ENCODE measurements at regions of chr21 and their contacts with region 1.

Region 1: GRCh38 chr21:36113647-36114428 is 21.0 kb upstream of the CBR3 start:
- DNase-seq: no peak
- H3K4me3 ChIP-seq: no peak overlapping the region
- H3K27ac ChIP-seq: no peak overlapping the region
- H3K4me1 ChIP-seq: no peaks in the 10 kb centered on the region
- H3K27me3 ChIP-seq: no peaks in the 10 kb centered on the region
- CTCF ChIP-seq: no peak
- EP300 ChIP-seq: no peak
- POLR2A ChIP-seq: no peak

Region 2: GRCh38 chr21:35616090-35616489 is 497.7 kb before region 1 on chr21:
- intact Hi-C with region 1: no loop called
- DNase-seq: no peak
- H3K4me3 ChIP-seq: no peak overlapping the region
- H3K27ac ChIP-seq: no peak overlapping the region
- H3K4me1 ChIP-seq: peaks cover 2% of the 10 kb centered on the region
- H3K27me3 ChIP-seq: no peaks in the 10 kb centered on the region
- CTCF ChIP-seq: peak in 1 of 3 donors; percentile 54
- EP300 ChIP-seq: no peak
- POLR2A ChIP-seq: no peak

Region 3: DNA sequence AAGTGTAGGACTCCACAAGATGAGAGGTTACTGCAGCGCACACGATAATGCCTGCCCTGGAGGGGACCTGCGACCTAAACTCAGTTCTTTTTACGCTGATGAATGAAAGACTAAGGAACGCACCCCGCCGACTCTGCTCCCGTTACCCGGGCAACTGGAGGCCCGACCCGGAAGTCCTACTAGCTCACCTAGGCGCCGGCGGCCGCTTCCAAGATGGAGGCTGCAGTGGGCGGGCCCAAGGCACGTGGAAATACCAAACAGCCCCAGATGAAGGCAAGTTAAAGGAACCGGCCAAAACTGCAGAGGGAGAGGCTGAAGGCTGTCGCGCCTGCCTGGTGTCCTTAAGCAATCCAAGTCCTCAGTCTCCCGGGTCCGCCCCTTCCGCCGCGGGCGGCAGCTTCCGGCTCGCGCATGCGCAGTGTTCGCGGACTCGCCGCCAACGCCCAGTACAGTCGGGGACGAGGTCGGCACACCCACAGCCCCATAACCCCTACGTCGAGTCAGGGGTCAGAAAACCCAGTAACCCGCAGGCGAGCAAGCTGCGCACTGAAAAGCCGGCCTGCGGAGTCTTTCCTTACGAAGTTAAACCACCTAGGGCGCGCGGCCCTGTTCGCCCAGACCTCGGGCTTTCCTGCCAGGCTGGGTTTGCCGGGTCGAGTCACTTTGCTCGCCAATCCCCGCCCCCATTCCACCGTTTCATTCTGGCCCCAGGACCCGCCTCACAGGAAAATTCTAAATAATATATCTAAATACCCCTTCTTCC is 53.5 kb before region 1 on chr21 and contains the start of gene SETD4:
- intact Hi-C with region 1: loop called in 1 of 4 experiments (anchors 10 kb)
- DNase-seq: peak; percentile 88 to 95 (median 93)
- H3K4me3 ChIP-seq: peak within 1 kb of the TSS; percentile 73
- H3K27ac ChIP-seq: peak within 1 kb of the TSS; percentile 73 to 77
- H3K4me1 ChIP-seq: peaks cover 2% of the 10 kb centered on the region
- H3K27me3 ChIP-seq: no peaks in the 10 kb centered on the region
- CTCF ChIP-seq: no peak
- EP300 ChIP-seq: no peak
- POLR2A ChIP-seq: peak; percentile 71
- total RNA-seq, gene SETD4: 12.2 to 22.9 (median 15.6) TPM